Endothelial cell of umbilical vein (primary cell): ENCODE measurements at regions of chr1 and their contacts with region 1.

Region 1: DNA sequence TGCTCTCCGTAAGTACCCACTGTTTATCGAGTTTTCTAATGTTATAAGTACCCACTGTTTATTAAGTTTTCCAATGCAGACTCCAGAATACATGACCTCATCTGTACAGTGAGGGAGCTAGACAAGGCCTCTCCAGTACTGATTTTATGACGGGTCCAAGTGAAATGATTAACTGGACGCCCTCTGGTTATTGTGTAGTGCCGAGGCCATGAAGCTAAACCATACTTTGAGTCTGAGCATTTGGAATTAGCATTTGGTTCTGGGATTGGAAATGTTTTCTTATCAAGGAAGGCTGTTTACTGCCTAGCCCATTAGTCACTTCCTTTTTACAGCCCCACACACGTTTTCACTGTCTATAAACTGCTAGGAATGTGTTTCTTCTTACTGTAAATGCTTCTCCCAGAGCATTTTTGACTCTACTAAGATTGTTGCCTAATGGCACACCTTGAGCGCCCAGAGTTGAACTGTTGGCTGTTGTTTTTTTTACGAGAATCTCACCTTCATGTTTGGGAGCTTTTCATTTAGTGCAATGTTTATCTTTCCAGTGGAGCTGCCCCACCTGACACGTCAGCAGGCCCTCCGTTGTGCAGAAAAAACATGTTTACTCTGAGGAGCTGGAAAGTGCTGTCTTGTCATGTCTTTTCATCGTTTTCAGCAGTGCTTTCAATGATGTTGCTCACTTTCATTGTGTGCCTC is 26.9 kb downstream of the SPATA46 start:
- DNase-seq: peak; percentile 95
- H3K4me3 ChIP-seq: no peak overlapping the region
- H3K27ac ChIP-seq: peak overlapping the region; percentile 93
- H3K4me1 ChIP-seq: peaks cover 28% of the 10 kb centered on the region
- H3K27me3 ChIP-seq: no peaks in the 10 kb centered on the region
- CTCF ChIP-seq: no peak
- POLR2A ChIP-seq: peak; percentile 47

Region 2: GRCh38 chr1:162305969-162306368 is 43.8 kb before region 1 on chr1:
- CTCF ChIA-PET with region 1: interaction called, 3 read pairs
- POLR2A ChIA-PET with region 1: no interaction called
- dilution Hi-C with region 1: no loop called
- intact Hi-C with region 1: loop called (anchors 2 kb)
- DNase-seq: peak; percentile 80
- H3K4me3 ChIP-seq: no peak overlapping the region
- H3K27ac ChIP-seq: peak overlapping the region; percentile 61
- H3K4me1 ChIP-seq: peaks cover 44% of the 10 kb centered on the region
- H3K27me3 ChIP-seq: no peaks in the 10 kb centered on the region
- CTCF ChIP-seq: no peak
- POLR2A ChIP-seq: no peak

Region 3: DNA sequence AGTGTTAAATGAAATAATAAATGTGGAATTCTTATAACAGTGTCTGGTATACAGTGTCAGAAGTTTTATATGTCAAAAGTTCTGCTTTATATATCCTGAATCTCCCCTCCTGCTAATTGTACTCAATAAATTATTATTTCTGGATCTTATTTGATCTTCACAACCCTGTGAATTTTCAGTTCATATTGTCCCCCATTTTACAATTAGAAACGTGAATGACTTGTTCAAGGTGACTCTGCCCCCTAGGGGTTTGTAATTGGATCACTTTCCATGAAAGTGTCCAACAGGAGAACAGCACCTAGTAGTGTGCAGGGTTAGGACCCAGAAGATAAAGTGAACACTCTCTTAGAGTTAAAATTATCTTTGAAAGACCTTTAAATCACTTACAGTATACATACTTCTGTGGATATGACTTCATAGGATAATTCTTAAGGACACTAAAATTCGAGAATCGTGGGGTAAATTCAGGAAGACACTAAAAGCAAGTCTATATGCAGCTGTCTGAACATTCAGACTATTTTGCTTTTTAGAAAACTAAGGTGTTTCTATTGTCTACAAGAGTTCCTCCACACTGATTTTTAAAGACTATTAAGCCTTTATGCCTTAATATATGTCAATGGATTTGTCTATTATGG is 278.0 kb after region 1 on chr1:
- CTCF ChIA-PET with region 1: no interaction called
- POLR2A ChIA-PET with region 1: no interaction called
- dilution Hi-C with region 1: no loop called
- intact Hi-C with region 1: loop called (anchors 5 kb)
- DNase-seq: peak; percentile 48
- H3K4me3 ChIP-seq: no peak overlapping the region
- H3K27ac ChIP-seq: no peak overlapping the region
- H3K4me1 ChIP-seq: peaks cover 34% of the 10 kb centered on the region
- H3K27me3 ChIP-seq: no peaks in the 10 kb centered on the region
- CTCF ChIP-seq: peak; percentile 47 to 51
- POLR2A ChIP-seq: no peak